ENCODE measurements at regions of chr14 and their contacts with region 1.

Region 1: GRCh38 chr14:100383727-100384158 is 60.6 kb downstream of the SLC25A47 start:
- DNase-seq: peak; percentile 78
- H3K4me3 ChIP-seq: no peak overlapping the region
- H3K27ac ChIP-seq: peak overlapping the region; percentile 3
- H3K4me1 ChIP-seq: peaks cover 3% of the 10 kb centered on the region
- H3K27me3 ChIP-seq: no peaks in the 10 kb centered on the region
- CTCF ChIP-seq: peak; percentile 83

Region 2: GRCh38 chr14:100108042-100108825 is 275.5 kb before region 1 on chr14:
- intact Hi-C with region 1: no loop called
- DNase-seq: peak; percentile 85
- H3K4me3 ChIP-seq: no peak overlapping the region
- H3K27ac ChIP-seq: no peak overlapping the region
- H3K4me1 ChIP-seq: no peaks in the 10 kb centered on the region
- H3K27me3 ChIP-seq: no peaks in the 10 kb centered on the region
- CTCF ChIP-seq: peak; percentile 78

Region 3: DNA sequence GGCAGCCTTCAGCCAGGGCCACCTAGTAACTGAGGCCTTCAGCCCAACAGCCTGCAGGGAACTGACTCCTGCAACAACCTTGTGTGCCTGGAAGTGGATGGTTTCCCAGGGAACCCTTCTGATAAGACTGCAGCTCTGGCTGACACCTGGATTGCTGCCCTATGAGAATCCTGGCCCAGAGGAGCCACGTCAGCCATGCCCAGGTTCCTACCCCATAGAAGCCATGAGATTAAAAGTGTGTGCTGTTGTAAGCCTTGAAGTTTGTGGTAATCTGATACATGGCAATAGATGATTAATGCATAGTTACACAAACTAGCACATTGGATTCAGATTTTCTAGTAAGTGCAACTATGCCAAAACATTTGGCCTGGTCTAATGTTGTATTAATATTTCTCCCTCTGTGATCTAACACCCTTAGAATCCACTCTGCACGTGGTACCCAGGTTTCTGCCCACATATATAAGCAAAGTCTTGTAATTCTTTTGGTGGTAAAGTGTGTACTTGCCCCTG is 268.3 kb after region 1 on chr14:
- intact Hi-C with region 1: loop called (anchors 2 kb)
- DNase-seq: no peak
- H3K4me3 ChIP-seq: no peak overlapping the region
- H3K27ac ChIP-seq: no peak overlapping the region
- H3K4me1 ChIP-seq: peaks cover 3% of the 10 kb centered on the region
- H3K27me3 ChIP-seq: no peaks in the 10 kb centered on the region
- CTCF ChIP-seq: no peak

Region 4: GRCh38 chr14:101628471-101628966 is 1244.8 kb after region 1 on chr14:
- intact Hi-C with region 1: loop called (anchors 5 kb)
- DNase-seq: peak; percentile 73
- H3K4me3 ChIP-seq: no peak overlapping the region
- H3K27ac ChIP-seq: no peak overlapping the region
- H3K4me1 ChIP-seq: peaks cover 8% of the 10 kb centered on the region
- H3K27me3 ChIP-seq: no peaks in the 10 kb centered on the region
- CTCF ChIP-seq: peak; percentile 100

Measured in colonic mucosa (tissue), 4 donors.